ENCODE measurements at regions of chr20 and their contacts with region 1.

Region 1: DNA sequence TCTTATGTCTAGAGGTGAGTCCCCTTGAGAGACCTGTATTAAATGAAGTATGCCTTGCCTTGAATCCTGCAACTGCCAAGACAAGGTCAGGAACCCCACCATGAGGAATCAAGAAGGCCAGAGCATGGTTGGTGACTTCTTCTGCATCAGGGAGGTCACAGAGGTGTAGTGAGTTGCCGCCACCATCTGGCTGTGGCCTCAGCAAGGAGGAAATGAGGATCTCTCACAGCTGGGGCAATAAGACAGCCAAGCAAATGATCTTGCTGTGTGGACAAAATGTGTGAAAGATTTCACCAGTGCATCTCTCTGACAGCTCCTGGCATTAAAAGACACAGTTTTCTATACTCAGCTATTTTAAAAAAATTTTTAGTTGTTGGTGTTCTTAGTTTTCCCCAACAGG is 611.0 kb downstream of the DOK5 start:
- DNase-seq: no peak
- H3K4me3 ChIP-seq: no peak overlapping the region
- H3K27ac ChIP-seq: no peak overlapping the region
- H3K4me1 ChIP-seq: no peaks in the 10 kb centered on the region
- H3K27me3 ChIP-seq: no peaks in the 10 kb centered on the region
- CTCF ChIP-seq: no peak

Region 2: DNA sequence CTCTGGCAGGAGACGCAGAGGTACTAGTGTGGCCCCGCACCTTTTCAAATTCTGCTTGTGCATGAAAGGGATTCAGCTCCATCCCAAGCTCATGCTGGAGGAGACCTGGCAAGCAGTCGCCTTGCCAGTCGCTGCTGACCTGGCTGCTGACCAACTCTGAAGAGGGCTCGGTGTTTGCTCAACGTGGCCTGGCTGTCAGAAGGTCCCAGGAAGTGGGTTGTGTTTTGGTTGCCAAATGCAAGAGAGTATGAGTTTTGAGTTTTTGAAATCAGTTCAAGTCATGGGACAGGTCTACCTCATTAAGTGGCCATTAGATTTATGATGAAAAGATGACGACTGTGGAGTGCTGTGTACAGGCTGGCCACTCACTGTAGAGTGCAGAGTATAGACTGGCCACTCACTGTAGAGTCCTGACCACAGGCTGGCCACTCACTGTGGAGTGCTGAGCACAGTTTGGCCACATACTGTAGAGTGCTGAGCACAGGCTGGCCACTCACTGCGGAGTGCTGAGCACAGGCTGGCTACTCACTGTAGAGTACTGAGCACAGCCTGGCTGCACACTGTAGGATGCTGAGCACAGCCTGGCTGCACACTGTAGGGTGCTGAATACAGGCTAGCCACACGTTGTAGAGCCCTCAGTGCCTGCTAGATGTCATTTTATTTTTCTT is 1686.7 kb before region 1 on chr20:
- intact Hi-C with region 1: loop called (anchors 10 kb)
- DNase-seq: no peak
- H3K4me3 ChIP-seq: no peak overlapping the region
- H3K27ac ChIP-seq: no peak overlapping the region
- H3K4me1 ChIP-seq: no peaks in the 10 kb centered on the region
- H3K27me3 ChIP-seq: no peaks in the 10 kb centered on the region
- CTCF ChIP-seq: no peak

Region 3: GRCh38 chr20:54804609-54805008 is 281.8 kb before region 1 on chr20:
- intact Hi-C with region 1: no loop called
- DNase-seq: no peak
- H3K4me3 ChIP-seq: no peak overlapping the region
- H3K27ac ChIP-seq: no peak overlapping the region
- H3K4me1 ChIP-seq: no peaks in the 10 kb centered on the region
- H3K27me3 ChIP-seq: no peaks in the 10 kb centered on the region
- CTCF ChIP-seq: no peak

Region 4: GRCh38 chr20:55132523-55132922 is 46.1 kb after region 1 on chr20:
- intact Hi-C with region 1: no loop called
- DNase-seq: no peak
- H3K4me3 ChIP-seq: no peak overlapping the region
- H3K27ac ChIP-seq: no peak overlapping the region
- H3K4me1 ChIP-seq: no peaks in the 10 kb centered on the region
- H3K27me3 ChIP-seq: no peaks in the 10 kb centered on the region
- CTCF ChIP-seq: no peak